ENCODE measurements at regions of chr9 and their contacts with region 1.

Region 1: DNA sequence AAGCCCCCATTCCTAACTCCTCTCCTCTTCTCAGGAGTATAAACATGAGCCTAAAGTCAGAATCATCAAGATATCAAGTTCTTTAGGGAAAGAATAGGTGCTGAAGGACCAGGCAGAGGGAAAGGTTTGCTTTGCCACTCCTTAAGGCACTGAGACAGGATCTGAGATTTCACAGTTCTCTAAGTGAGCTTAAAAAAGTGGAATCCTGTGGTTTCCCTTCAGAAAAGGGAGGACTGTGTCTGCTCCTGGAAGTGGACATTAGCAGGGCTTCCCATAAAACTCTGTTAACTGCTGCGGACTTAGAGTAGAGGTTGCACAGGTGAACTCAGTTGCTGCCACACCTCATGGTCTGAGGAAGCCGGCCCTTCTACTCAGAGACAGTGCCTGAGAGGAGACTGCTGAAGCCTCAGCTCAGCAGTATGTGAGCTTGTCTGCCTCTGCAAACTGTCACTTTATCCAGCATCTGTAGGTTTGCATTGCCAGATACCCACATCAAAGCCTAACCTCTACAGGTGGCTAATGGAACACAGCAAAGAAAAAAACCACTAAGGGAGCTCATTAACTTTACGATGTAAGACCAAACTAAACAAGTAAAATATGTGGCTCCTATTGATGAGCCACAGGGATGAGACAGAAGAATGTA is 42.9 kb downstream of the RIC1 start:
- DNase-seq: no peak
- ATAC-seq: no peak
- H3K4me3 ChIP-seq: no peak overlapping the region
- H3K4me3 Mint-ChIP-seq: no peak overlapping the region
- H3K27ac ChIP-seq: no peak overlapping the region
- H3K27ac Mint-ChIP-seq: peak overlapping the region; percentile 34
- H3K4me1 ChIP-seq: no peaks in the 10 kb centered on the region
- H3K4me1 Mint-ChIP-seq: peaks cover 30% of the 10 kb centered on the region
- H3K27me3 ChIP-seq: no peaks in the 10 kb centered on the region
- H3K27me3 Mint-ChIP-seq: no peaks in the 10 kb centered on the region
- CTCF ChIP-seq: no peak

Region 2: DNA sequence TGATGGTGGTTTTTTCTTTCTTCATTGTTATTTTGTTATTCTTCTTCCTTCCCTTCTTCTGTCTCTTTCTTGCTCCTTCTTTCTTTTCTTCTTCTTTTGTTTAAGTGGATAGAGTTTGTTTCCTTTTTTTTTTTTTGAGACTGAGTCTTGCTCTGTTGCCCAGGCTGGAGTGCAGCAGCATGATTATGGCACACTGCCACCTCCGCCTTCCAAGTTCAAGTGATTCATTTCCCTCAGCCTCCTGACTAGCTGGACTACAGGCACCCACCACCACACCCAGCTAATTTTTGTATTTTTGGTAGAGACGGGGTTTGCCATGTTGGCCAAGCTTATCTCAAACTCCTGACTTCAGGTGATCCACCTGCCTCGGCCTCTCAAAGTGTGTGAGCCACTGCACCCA is 646.4 kb before region 1 on chr9:
- CTCF ChIA-PET with region 1: no interaction called
- POLR2A ChIA-PET with region 1: no interaction called
- intact Hi-C with region 1: no loop called
- DNase-seq: no peak
- ATAC-seq: no peak
- H3K4me3 ChIP-seq: no peak overlapping the region
- H3K4me3 Mint-ChIP-seq: no peak overlapping the region
- H3K27ac ChIP-seq: no peak overlapping the region
- H3K27ac Mint-ChIP-seq: no peak overlapping the region
- H3K4me1 ChIP-seq: no peaks in the 10 kb centered on the region
- H3K4me1 Mint-ChIP-seq: peaks cover 5% of the 10 kb centered on the region
- H3K27me3 ChIP-seq: no peaks in the 10 kb centered on the region
- H3K27me3 Mint-ChIP-seq: no peaks in the 10 kb centered on the region
- CTCF ChIP-seq: no peak

Region 3: DNA sequence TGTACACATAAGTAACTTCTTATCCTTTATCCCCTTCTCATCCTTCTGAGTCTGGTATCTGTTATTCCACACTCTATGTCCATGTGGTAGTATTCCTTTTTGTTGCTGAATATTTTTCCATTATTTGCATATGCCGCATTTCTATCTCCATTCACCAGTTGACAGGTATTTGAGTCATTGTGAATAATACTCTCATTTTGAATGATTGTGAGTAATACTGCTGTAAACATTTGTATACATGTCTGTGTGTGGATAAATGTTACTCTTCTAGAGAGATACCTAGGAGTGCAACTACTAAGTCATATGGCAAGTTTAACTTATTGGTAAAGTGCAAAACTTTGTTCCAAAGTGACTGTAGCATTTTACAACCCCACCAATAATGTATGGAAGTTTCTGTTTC is 27.3 kb before region 1 on chr9:
- CTCF ChIA-PET with region 1: no interaction called
- POLR2A ChIA-PET with region 1: no interaction called
- intact Hi-C with region 1: loop called (anchors 5 kb)
- DNase-seq: no peak
- ATAC-seq: no peak
- H3K4me3 ChIP-seq: no peak overlapping the region
- H3K4me3 Mint-ChIP-seq: no peak overlapping the region
- H3K27ac ChIP-seq: no peak overlapping the region
- H3K27ac Mint-ChIP-seq: no peak overlapping the region
- H3K4me1 ChIP-seq: peaks cover 0 to 18% of the 10 kb centered on the region in 2 donors
- H3K4me1 Mint-ChIP-seq: peaks cover 54% of the 10 kb centered on the region
- H3K27me3 ChIP-seq: no peaks in the 10 kb centered on the region
- H3K27me3 Mint-ChIP-seq: no peaks in the 10 kb centered on the region
- CTCF ChIP-seq: no peak

Region 4: DNA sequence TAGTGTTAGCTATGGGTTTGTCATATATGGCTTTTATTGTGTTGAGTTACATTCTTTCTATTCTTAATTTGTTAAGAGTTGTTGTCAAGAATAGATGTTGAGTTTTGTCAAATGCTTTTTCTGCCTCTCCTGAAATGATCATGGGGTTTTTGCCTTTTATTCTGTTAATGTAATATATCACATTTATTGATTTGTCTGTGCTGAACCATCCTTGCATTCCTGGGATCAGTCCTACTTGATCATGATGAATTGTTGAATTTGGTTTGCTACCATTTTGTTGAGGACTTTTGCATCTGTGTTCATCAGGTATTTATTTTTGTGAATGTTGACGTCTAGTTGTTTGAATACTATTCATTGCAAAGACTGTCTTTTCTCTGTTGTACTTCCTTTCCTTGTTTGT is 19.0 kb before region 1 on chr9:
- CTCF ChIA-PET with region 1: no interaction called
- POLR2A ChIA-PET with region 1: no interaction called
- intact Hi-C with region 1: loop called (anchors 2 kb)
- DNase-seq: no peak
- ATAC-seq: no peak
- H3K4me3 ChIP-seq: no peak overlapping the region
- H3K4me3 Mint-ChIP-seq: no peak overlapping the region
- H3K27ac ChIP-seq: no peak overlapping the region
- H3K27ac Mint-ChIP-seq: no peak overlapping the region
- H3K4me1 ChIP-seq: no peaks in the 10 kb centered on the region
- H3K4me1 Mint-ChIP-seq: peaks cover 33% of the 10 kb centered on the region
- H3K27me3 ChIP-seq: no peaks in the 10 kb centered on the region
- H3K27me3 Mint-ChIP-seq: no peaks in the 10 kb centered on the region
- CTCF ChIP-seq: no peak

Measured in B cell (primary cell).